ENCODE measurements at regions of chr20 and their contacts with region 1.

Region 1: DNA sequence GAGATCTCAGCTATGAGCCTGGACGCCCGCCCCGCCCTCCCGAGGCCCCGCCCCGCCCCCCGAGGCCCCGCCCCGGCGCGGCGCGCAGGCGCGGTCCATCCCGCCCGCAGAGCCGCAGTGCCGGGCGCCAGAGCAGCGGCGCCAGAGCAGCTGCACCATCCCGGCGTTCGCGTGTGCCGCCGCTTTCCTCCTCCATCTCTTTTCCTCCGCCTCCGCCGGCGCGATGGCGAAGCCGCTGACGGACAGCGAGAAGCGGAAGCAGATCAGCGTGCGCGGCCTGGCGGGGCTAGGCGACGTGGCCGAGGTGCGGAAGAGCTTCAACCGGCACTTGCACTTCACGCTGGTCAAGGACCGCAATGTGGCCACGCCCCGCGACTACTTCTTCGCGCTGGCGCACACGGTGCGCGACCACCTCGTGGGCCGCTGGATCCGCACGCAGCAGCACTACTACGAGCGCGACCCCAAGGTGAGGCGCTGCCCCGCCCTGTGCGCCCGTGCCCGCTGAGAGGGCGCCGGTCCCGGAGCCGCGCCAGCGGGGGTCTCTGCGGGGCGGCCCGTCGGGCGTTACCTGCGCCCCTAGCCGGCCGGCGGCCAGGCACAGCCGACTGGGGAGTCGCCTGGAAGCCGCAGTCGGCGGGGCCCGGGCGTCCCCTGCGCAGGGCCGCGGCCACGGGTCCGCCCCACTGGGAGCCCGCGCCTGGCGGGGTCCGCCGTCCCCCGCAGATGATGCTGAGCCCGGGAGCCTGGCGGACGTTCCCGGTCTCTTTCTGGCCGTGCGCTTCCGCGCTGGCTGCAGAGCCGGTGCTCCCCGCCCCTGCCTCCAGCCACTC is at the start of gene PYGB:
- DNase-seq: peak; percentile 64 to 70
- ATAC-seq: peak; percentile 89 to 90
- H3K4me3 ChIP-seq: peak within 1 kb of the TSS; percentile 74 to 92 (median 84)
- H3K27ac ChIP-seq: peak within 1 kb of the TSS; percentile 79 to 92 (median 84)
- H3K4me1 ChIP-seq: peaks cover 24 to 38% of the 10 kb centered on the region in 2 donors
- H3K27me3 ChIP-seq: no peaks in the 10 kb centered on the region
- CTCF ChIP-seq: no peak
- POLR2A ChIP-seq: peak; percentile 79 to 83
- total RNA-seq, gene PYGB: 13.6 to 50.7 (median 27.0) TPM

Region 2: DNA sequence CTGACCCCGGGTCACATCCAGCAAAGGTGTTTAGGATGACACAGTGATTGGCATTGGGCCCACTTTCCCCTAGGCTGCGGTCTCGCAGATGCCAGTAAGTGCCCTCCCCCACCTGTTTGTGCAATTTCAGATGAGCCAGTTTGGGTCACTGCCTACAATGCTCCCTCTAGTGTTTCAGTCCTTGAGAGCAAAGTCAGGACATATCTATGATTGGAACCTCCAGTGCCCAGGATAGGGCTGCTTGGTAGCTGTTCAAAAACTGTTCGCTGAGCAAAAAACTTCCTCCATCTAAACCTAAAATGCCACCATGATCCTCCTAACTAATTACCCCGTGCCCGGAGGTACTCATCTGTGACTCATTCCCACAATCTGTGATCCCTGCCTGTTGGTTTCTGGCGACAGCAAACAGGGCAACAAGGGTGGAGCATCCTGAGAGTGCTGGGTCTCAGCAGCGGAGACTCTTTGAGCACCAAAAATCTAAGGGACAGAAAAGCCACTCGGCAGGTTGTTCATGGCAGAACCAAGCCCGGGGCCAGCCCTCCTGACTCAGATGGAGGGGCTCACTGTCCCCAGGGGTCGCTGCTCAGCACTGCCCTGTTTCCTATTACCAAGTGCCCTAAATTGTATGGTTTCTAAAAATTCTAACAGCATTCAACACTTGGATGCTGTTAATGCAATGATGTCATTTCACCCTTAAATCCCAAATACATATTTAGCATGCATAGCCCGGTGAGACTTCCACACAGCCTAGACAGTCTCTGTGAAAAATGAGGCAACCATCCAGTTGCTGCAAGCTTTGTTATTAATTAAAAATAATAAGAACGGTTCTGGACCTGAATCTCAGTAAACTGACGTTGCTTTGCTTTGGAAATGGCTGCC is 171.2 kb before region 1 on chr20:
- in situ Hi-C with region 1: no loop called
- intact Hi-C with region 1: loop called (anchors 5 kb)
- DNase-seq: peak in 1 of 2 donors; percentile 57
- ATAC-seq: peak; percentile 76 to 77
- H3K4me3 ChIP-seq: peak overlapping the region; percentile 41 to 52 (median 48)
- H3K27ac ChIP-seq: peak overlapping the region; percentile 56 to 70 (median 62)
- H3K4me1 ChIP-seq: peaks cover 16 to 19% of the 10 kb centered on the region in 2 donors
- H3K27me3 ChIP-seq: peaks cover 13 to 25% (median 23%) of the 10 kb centered on the region in 3 donors
- CTCF ChIP-seq: peak in 3 of 5 experiments; percentile 16 to 44 (median 22)
- POLR2A ChIP-seq: no peak

Region 3: GRCh38 chr20:25126630-25127029 is 121.5 kb before region 1 on chr20:
- in situ Hi-C with region 1: no loop called
- intact Hi-C with region 1: no loop called
- DNase-seq: no peak
- ATAC-seq: no peak
- H3K4me3 ChIP-seq: no peak overlapping the region
- H3K27ac ChIP-seq: no peak overlapping the region
- H3K4me1 ChIP-seq: no peaks in the 10 kb centered on the region
- H3K27me3 ChIP-seq: no peaks in the 10 kb centered on the region
- CTCF ChIP-seq: no peak
- POLR2A ChIP-seq: no peak

Region 4: GRCh38 chr20:25178563-25179438 is 69.4 kb before region 1 on chr20:
- in situ Hi-C with region 1: no loop called
- intact Hi-C with region 1: no loop called
- DNase-seq: peak; percentile 30 to 82
- ATAC-seq: peak; percentile 94 to 96
- H3K4me3 ChIP-seq: no peak overlapping the region
- H3K27ac ChIP-seq: peak overlapping the region; percentile 39 to 63 (median 50)
- H3K4me1 ChIP-seq: no peaks in the 10 kb centered on the region
- H3K27me3 ChIP-seq: no peaks in the 10 kb centered on the region
- CTCF ChIP-seq: peak; percentile 62 to 84 (median 73)
- POLR2A ChIP-seq: no peak

Region 5: DNA sequence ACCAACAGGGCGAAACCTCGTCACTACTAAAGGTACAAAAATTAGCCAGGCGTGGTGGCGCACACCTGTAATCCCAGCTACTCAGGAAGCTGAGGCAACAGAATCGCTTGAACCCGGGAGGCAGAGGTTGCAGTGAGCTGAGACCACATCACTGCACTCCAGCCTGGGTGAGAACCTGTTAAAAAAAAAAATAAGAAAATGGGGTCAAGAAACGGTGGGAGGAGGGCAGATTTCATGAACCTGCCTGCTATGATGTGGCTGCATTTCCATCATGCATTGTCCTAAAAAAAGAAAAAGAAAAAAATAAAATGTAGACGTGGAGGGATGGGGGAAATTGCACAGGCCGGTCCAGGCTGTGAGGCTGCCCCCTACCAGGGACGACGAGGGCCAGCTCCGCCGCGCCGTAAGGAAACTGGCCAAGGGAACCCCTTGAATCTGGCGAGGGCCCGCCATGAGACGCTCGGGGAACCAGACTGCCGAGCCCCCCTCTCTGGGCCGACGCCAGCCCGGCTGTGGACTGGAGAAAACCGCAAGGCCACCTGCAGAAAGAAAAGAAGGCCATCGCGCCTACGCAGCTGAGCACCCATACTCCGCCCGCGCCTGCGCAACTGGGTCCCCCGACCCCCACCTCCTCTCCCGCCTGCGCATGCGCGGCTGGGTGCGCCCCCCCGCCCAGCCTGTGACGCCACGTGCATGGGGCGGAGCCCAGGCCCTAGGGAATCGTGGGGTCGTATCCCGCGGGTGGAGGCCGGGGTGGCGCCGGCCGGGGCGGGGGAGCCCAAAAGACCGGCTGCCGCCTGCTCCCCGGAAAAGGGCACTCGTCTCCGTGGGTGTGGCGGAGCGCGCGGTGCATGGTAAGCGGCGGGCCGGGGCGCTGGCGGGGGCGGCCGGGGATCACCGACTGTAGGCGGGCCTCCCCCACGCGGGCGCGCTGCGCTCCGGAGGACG is 52.9 kb before region 1 on chr20 and contains the start of gene ENTPD6:
- in situ Hi-C with region 1: no loop called
- intact Hi-C with region 1: loop called (anchors 1 kb)
- DNase-seq: peak; percentile 81 to 88
- ATAC-seq: peak; percentile 94
- H3K4me3 ChIP-seq: peak within 1 kb of the TSS; percentile 75 to 96 (median 84)
- H3K27ac ChIP-seq: peak within 1 kb of the TSS; percentile 78 to 95 (median 86)
- H3K4me1 ChIP-seq: peaks cover 6 to 24% of the 10 kb centered on the region in 2 donors
- H3K27me3 ChIP-seq: no peaks in the 10 kb centered on the region
- CTCF ChIP-seq: peak in 2 of 5 experiments; percentile 28 to 31
- POLR2A ChIP-seq: peak; percentile 59 to 78
- total RNA-seq, gene ENTPD6: 27.0 to 61.1 (median 50.2) TPM

Region 6: GRCh38 chr20:25223179-25223661 is 25.0 kb before region 1 on chr20:
- in situ Hi-C with region 1: no loop called
- intact Hi-C with region 1: loop called (anchors 2 kb)
- DNase-seq: no peak
- ATAC-seq: no peak
- H3K4me3 ChIP-seq: no peak overlapping the region
- H3K27ac ChIP-seq: peak overlapping the region in 1 of 4 donors; percentile 13
- H3K4me1 ChIP-seq: peaks cover 33 to 39% of the 10 kb centered on the region in 2 donors
- H3K27me3 ChIP-seq: no peaks in the 10 kb centered on the region
- CTCF ChIP-seq: no peak
- POLR2A ChIP-seq: no peak

Region 7: GRCh38 chr20:25294459-25295385 is 46.6 kb after region 1 on chr20:
- in situ Hi-C with region 1: no loop called
- intact Hi-C with region 1: loop called (anchors 2 kb)
- DNase-seq: peak in 1 of 2 donors; percentile 48
- ATAC-seq: peak; percentile 19 to 28
- H3K4me3 ChIP-seq: no peak overlapping the region
- H3K27ac ChIP-seq: peak overlapping the region; percentile 46 to 85 (median 65)
- H3K4me1 ChIP-seq: peaks cover 26 to 32% of the 10 kb centered on the region in 2 donors
- H3K27me3 ChIP-seq: no peaks in the 10 kb centered on the region
- CTCF ChIP-seq: peak; percentile 51 to 80 (median 55)
- POLR2A ChIP-seq: no peak